ENCODE measurements at regions of chr12 and their contacts with region 1.

Region 1: DNA sequence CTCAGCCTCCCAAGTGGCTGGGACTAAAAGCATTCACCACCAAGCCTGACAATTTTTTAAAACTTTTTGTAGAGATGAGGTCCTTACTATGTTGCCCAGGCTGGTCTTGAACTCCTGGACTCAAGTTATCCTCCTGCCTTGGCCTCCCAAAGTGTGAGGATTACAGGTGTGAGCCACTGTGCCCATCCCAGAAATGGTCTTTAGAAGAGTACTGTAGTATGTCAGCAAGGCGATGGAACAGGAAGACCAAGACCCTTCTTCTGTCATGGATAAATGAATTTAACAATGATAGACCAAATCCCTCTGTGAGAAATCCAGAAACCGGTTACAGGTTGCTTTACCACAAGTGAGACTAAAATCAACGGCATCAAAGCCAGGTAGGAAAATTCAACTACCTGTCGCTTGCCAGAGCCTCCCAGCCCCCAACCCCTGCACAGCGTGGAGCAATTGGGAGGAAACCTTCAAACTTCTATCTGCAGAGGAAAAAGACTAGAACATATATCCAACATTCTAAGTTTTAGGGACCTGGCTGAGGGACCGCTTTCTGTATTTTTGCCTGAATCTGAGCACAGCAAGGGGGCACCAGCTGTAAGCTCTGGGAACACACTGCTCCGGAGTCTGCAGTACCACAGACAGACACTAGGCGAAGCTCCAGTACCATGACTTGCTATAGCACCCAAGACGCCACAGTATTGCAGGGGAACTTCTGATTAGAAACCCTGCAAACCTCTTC is 51.3 kb downstream of the CPSF6 start:
- DNase-seq: peak; percentile 87 to 93 (median 92)
- ATAC-seq: peak; percentile 99
- H3K4me3 ChIP-seq: no peak overlapping the region
- H3K27ac ChIP-seq: no peak overlapping the region
- H3K4me1 ChIP-seq: peaks cover 9% of the 10 kb centered on the region
- H3K27me3 ChIP-seq: no peaks in the 10 kb centered on the region
- CTCF ChIP-seq: peak; percentile 93 to 98 (median 96)
- POLR2A ChIP-seq: no peak

Region 2: GRCh38 chr12:69359531-69360347 is 69.0 kb after region 1 on chr12 and contains the start of gene YEATS4:
- intact Hi-C with region 1: loop called (anchors 10 kb)
- DNase-seq: peak; percentile 95 to 97 (median 96)
- ATAC-seq: peak; percentile 92
- H3K4me3 ChIP-seq: peak within 1 kb of the TSS; percentile 71 to 85
- H3K27ac ChIP-seq: peak within 1 kb of the TSS; percentile 99
- H3K4me1 ChIP-seq: peaks cover 25% of the 10 kb centered on the region
- H3K27me3 ChIP-seq: no peaks in the 10 kb centered on the region
- CTCF ChIP-seq: peak in 3 of 7 experiments; percentile 4 to 26 (median 25)
- POLR2A ChIP-seq: peak; percentile 81 to 91 (median 87)
- total RNA-seq, gene YEATS4: 14.3 to 15.8 TPM

Region 3: DNA sequence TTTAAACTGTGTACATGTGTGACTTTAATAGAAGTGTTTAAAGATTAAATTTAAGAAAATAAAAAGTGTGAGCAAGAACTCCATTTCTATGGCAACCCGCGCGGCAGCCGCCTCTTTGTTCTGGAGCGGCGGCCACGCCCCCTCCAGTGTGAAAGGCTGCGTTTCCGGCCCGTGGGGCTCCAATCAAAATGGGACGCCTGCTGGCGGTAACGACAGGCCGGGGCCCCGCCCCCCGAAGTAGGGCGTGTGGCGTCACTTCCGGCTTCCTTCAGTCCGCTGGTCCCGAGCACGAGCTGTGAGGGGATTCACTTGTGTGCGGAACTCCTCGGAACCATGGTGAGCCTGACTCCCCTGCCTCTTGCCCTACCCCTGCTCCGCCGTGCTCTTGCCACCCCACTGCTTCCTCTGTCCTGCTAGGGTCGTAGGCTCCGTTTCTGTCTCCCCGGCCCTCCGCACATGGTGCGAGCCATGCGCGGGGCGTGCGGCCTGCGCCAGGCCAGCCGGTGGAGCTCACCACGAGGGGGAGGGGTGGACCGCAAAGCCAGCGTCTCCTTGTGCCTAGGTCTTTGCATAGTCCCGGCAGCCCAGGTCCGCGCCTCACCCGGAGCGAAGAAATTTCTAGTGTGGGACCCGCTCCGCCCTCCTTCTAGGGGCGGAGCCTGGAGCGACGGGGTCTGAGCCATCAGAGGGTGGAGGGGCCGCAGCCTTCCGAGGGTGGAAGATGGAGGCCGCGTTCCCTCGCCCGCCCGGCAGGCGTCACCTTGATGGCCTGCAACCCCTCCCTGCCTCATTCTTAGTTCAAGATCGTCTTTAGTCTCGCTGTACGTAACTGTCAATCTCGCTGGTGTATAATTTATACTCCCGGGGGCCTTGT is 294.7 kb after region 1 on chr12 and contains the start of gene CCT2:
- intact Hi-C with region 1: loop called (anchors 10 kb)
- DNase-seq: peak; percentile 97 to 98 (median 97)
- ATAC-seq: peak; percentile 100
- H3K4me3 ChIP-seq: peak within 1 kb of the TSS; percentile 90 to 99
- H3K27ac ChIP-seq: peak within 1 kb of the TSS; percentile 59 to 85 (median 75)
- H3K4me1 ChIP-seq: peaks cover 11% of the 10 kb centered on the region
- H3K27me3 ChIP-seq: no peaks in the 10 kb centered on the region
- CTCF ChIP-seq: peak in 4 of 7 experiments; percentile 20 to 35 (median 29)
- POLR2A ChIP-seq: peak; percentile 68 to 90 (median 89)
- total RNA-seq, gene CCT2: 68.2 to 71.1 TPM